ENCODE measurements at regions of chr11 and their contacts with region 1.

Region 1: GRCh38 chr11:128948589-128948988 is 5.9 kb upstream of the TP53AIP1 start:
- DNase-seq: no peak
- CTCF ChIP-seq: peak; percentile 10

Region 2: GRCh38 chr11:128936606-128937251 is 11.9 kb before region 1 on chr11:
- CTCF ChIA-PET with region 1: interaction called, 11 read pairs
- POLR2A ChIA-PET with region 1: no interaction called
- DNase-seq: no peak
- CTCF ChIP-seq: no peak

Region 3: DNA sequence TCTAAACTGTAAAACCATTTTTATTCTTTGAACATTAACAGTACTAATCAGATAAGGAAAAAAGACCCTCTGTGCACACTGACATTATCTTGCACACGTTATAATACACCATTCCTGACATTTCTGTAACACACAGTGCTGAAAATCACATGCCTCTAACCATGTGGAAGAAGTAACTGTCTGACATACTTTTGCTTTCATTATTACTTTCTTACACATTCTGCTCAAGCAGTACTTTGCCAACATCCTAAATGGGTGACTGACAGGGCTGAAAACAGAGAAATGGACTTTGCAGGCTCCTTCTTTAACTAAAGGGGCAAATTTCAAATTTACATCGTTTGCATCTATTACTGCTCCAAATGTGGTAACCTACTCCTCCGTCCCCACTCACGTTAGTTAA is 16.9 kb after region 1 on chr11:
- CTCF ChIA-PET with region 1: no interaction called
- POLR2A ChIA-PET with region 1: no interaction called
- DNase-seq: peak; percentile 58
- CTCF ChIP-seq: no peak

Region 4: DNA sequence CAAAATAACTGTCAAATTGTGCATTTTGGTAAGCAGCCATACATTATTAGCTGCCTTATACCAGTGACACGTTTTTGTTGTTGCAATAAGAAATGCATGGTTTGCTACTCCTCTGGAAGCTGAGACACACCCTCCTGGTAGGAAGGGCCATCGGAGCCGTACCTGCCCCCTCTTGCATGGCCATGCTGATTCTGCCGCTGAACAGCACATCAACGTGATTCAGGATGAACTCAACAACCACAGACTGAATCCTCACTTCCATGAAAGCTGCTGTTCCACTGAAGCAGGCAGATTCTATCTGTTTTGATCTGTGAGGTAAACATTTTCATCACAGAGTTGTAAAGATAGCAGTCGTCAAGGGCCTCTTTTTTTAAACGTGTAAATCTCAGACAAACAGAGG is 32.7 kb after region 1 on chr11:
- CTCF ChIA-PET with region 1: no interaction called
- POLR2A ChIA-PET with region 1: no interaction called
- DNase-seq: no peak
- CTCF ChIP-seq: no peak

Measured in GM10248 (cell line).